ENCODE measurements at regions of chr18 and their contacts with region 1.

Region 1: DNA sequence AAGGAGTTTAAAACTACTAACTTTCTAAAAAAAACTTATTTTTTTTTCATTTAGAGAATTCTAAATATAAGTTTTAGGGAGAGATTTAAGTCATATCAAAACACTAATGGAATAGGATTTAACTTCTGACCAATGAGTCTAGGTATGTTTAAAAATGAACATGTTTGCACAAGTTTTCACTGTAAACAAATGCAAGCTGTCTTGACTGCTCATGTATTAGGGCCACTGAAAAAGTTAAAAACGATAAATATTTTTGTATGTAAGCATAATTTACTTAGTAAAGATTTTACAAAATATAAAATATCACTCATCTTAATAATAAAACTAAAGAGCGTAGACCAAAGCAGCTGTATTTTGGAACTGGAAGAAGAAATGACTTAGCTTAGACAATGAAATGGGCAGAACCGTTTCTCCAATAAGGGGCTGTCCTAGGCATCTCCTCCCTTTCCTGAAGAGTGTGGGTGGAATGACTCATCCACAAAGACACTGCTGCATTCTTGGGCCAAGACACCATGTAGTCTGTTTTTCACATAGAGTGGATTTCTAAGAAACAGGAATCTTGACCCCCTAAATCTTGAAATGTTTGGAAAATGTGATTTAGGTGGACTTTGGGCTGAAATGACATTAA is 118.8 kb downstream of the MEP1B start:
- DNase-seq: no peak

Region 2: DNA sequence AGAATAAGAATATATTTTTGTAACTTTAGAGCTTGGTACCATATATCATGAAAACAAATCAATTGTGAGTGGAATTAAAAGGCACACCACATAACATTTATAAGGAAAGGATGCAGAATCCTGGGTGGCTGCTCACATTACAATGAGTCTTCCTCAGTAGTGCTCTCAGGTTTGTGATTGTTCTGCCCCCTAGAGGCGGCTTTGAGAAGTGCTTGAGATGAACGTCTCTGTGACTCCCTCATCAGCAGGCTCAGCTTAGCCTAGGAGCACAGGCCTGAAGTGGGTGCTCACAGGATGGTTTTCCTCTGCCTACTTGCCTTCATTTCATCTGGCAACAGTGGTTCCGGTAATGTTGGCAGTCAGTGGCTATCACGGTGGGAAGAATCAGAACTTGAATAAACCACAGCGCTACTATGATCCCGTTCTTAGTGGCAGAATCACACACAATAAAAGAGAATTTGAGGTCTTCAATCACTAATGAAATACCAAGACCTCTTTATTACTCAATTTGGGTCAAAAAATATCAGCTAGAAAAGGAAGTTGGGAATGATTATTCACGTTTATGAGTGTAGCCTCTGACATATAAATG is 586.1 kb before region 1 on chr18:
- intact Hi-C with region 1: no loop called
- DNase-seq: peak; percentile 84

Region 3: GRCh38 chr18:32289483-32290075 is 19.0 kb before region 1 on chr18:
- intact Hi-C with region 1: loop called in 1 of 2 experiments (anchors 2 kb)
- DNase-seq: no peak

Measured in posterior vena cava (tissue), 2 donors.